K562 (cell line): ENCODE measurements at regions of chr3 and their contacts with region 1.

Region 1: GRCh38 chr3:138594150-138594934 is at the start of gene CEP70:
- DNase-seq: peak; percentile 88 to 93 (median 92)
- ATAC-seq: peak; percentile 97
- H3K4me3 ChIP-seq: peak within 1 kb of the TSS; percentile 64
- H3K27ac ChIP-seq: peak within 1 kb of the TSS; percentile 78
- H3K4me1 ChIP-seq: peaks cover 0 to 7% of the 10 kb centered on the region in 2 experiments; a peak in 3 of 5 replicates
- H3K27me3 ChIP-seq: no peaks in the 10 kb centered on the region
- CTCF ChIP-seq: peak; percentile 72 to 91 (median 77)
- EP300 ChIP-seq: peak; percentile 61
- POLR2A ChIP-seq: peak; percentile 79
- RAD21 ChIP-seq: peak; percentile 72 to 81
- polyA plus RNA-seq, gene CEP70: 19.5 to 29.3 TPM

Region 2: GRCh38 chr3:138417559-138417982 is 176.8 kb before region 1 on chr3:
- CTCF ChIA-PET with region 1: no interaction called
- POLR2A ChIA-PET with region 1: no interaction called
- in situ Hi-C with region 1: no loop called
- intact Hi-C with region 1: loop called (anchors 5 kb)
- DNase-seq: peak; percentile 67 to 79 (median 70)
- ATAC-seq: peak; percentile 98
- H3K4me3 ChIP-seq: no peak overlapping the region
- H3K27ac ChIP-seq: no peak overlapping the region
- H3K4me1 ChIP-seq: no peaks in the 10 kb centered on the region; a peak in 1 of 5 replicates
- H3K27me3 ChIP-seq: no peaks in the 10 kb centered on the region
- CTCF ChIP-seq: peak; percentile 87 to 96 (median 88)
- EP300 ChIP-seq: no peak
- POLR2A ChIP-seq: no peak
- RAD21 ChIP-seq: peak; percentile 72 to 88

Region 3: GRCh38 chr3:138578961-138579574 is 15.3 kb before region 1 on chr3:
- CTCF ChIA-PET with region 1: interaction called, 3 read pairs
- POLR2A ChIA-PET with region 1: interaction called, 28 read pairs
- in situ Hi-C with region 1: no loop called
- intact Hi-C with region 1: no loop called
- DNase-seq: peak in 1 of 4 experiments; percentile 15
- ATAC-seq: peak; percentile 72
- H3K4me3 ChIP-seq: no peak overlapping the region
- H3K27ac ChIP-seq: no peak overlapping the region
- H3K4me1 ChIP-seq: no peaks in the 10 kb centered on the region; a peak in 1 of 5 replicates
- H3K27me3 ChIP-seq: no peaks in the 10 kb centered on the region
- CTCF ChIP-seq: no peak
- EP300 ChIP-seq: no peak
- POLR2A ChIP-seq: no peak
- RAD21 ChIP-seq: no peak

Region 4: DNA sequence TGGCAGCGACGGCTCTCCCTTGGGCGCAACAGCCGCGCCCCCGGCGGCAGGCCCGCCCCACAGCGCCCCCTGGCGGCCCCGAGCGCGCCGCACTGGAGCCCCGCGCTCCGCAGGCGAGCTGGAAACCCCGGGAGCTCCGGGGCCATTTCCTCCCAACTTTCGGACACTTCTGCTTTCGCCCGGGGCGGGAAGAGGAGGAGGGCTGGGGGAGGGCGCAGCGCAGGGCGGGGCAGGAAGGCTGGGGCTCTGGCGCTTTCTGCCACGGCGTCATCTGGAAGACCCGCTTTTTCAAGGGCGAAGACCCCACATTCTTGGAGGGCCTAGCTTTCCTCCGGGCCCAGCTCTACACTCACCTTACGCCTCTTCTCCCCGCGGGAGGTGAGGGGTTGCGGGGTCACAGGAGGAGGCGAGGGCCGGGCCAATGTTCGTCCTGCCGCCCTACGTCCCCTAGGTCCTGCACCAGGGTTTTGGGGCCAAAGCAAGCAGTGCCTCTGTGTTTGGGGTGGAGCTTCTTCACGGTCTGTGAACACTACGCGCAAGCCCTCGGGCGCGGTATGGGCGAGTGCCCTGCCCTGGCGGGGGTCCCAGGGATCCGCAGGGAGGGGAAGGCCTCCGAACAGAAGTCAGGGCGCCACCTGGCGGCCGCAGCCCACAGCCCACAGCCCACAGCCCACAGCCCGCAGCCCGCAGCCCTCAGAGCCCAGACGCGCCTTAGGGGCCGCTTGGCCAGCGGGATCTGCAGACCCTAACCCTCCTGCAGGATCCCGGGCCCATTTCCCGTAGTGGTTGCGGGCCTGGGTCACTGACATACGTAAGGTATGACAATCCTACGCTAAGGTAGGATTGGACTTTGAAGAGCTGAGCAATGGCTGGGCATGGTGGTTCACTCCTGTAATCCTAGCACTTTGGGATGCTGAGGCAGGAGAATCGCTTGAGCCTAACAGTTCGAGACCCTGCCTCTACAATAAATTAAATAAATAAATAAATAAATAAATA is 321.5 kb after region 1 on chr3:
- CTCF ChIA-PET with region 1: interaction called, 14 read pairs
- POLR2A ChIA-PET with region 1: interaction called, 11 read pairs
- in situ Hi-C with region 1: no loop called
- intact Hi-C with region 1: loop called (anchors 1 kb)
- DNase-seq: peak; percentile 90 to 93 (median 92)
- ATAC-seq: peak; percentile 92
- H3K4me3 ChIP-seq: peak overlapping the region; percentile 79
- H3K27ac ChIP-seq: peak overlapping the region; percentile 98
- H3K4me1 ChIP-seq: peaks cover 29 to 36% of the 10 kb centered on the region in 2 experiments
- H3K27me3 ChIP-seq: no peaks in the 10 kb centered on the region
- CTCF ChIP-seq: peak; percentile 72 to 94 (median 78)
- EP300 ChIP-seq: no peak
- POLR2A ChIP-seq: peak; percentile 72
- RAD21 ChIP-seq: peak; percentile 91 to 94

Region 5: GRCh38 chr3:138935848-138936740 is 341.8 kb after region 1 on chr3:
- CTCF ChIA-PET with region 1: no interaction called
- POLR2A ChIA-PET with region 1: interaction called, 3 read pairs
- in situ Hi-C with region 1: loop called (anchors 5 kb)
- intact Hi-C with region 1: no loop called
- DNase-seq: peak; percentile 85 to 91 (median 88)
- ATAC-seq: peak; percentile 88
- H3K4me3 ChIP-seq: peak overlapping the region; percentile 45
- H3K27ac ChIP-seq: peak overlapping the region; percentile 54
- H3K4me1 ChIP-seq: peaks cover 4 to 43% of the 10 kb centered on the region in 2 experiments; a peak in 3 of 5 replicates
- H3K27me3 ChIP-seq: no peaks in the 10 kb centered on the region
- CTCF ChIP-seq: peak; percentile 83 to 88 (median 87)
- EP300 ChIP-seq: no peak
- POLR2A ChIP-seq: peak; percentile 58
- RAD21 ChIP-seq: peak; percentile 55 to 68

Region 6: DNA sequence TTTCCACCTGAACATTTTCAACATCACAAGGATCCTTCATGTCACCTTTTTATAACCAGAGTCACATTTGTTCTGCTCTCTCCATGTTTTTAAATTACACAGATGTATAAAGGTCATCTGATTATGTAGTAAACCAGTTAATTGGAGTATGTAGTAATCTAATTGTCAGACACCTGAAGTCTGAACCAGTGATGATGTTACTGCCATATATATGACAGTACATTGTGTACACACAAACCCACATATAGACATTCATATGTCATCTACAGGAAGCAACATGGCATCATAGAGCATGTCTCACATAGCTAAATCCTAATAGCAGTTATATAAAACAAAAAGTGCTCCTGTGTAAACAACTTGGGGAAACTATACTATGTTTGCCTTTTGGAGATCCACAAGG is 546.2 kb after region 1 on chr3:
- CTCF ChIA-PET with region 1: no interaction called
- POLR2A ChIA-PET with region 1: no interaction called
- in situ Hi-C with region 1: no loop called
- intact Hi-C with region 1: no loop called
- DNase-seq: no peak
- ATAC-seq: no peak
- H3K4me3 ChIP-seq: no peak overlapping the region
- H3K27ac ChIP-seq: no peak overlapping the region
- H3K4me1 ChIP-seq: peaks cover 0 to 4% of the 10 kb centered on the region in 2 experiments; a peak in 2 of 5 replicates
- H3K27me3 ChIP-seq: no peaks in the 10 kb centered on the region
- CTCF ChIP-seq: no peak
- EP300 ChIP-seq: no peak
- POLR2A ChIP-seq: no peak
- RAD21 ChIP-seq: no peak